Mammary epithelial cell (primary cell): ENCODE measurements at regions of chr3 and their contacts with region 1.

Region 1: DNA sequence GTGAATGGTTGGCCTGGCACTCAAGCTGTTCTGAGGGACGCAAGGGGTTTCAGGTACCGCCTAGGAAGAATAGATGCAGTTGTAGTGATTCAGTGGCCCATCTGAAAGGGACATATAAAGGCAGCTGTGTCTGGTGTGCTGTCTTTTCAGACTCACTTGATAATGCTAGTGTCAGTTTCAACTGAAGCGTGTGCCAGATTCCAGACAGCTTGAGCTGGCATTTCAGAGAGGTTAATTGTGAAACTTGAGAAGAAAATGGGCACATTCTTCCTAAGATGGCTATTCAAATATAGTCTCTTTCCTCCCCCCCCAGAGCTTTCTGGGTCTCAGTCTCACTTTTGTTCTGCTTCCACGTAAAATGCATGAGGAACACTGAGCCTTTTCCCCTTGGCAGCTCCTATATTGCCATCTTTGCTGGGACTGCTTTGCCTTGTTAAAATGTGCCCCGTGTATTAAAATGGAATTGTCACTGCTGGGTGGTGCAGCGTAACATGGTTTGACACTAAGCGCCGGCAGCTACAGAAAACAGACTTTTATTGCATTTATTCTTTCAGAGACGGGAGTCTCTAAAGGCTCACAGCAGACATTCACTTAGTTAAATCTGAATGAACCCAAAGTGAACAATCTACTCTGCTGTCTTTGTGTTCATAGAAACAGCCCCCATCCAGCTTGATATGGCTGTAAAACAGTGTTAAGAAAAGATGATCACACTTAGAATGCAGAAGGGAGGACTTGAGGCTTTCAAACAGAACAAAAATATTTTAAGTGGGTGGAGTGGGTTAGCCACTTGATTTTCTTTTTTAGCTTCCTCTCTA is 478.7 kb downstream of the RBMS3 start:
- DNase-seq: peak; percentile 78
- H3K4me3 ChIP-seq: no peak overlapping the region
- H3K27ac ChIP-seq: peak overlapping the region; percentile 89
- H3K4me1 ChIP-seq: peaks cover 40% of the 10 kb centered on the region
- H3K27me3 ChIP-seq: no peaks in the 10 kb centered on the region
- CTCF ChIP-seq: no peak

Region 2: DNA sequence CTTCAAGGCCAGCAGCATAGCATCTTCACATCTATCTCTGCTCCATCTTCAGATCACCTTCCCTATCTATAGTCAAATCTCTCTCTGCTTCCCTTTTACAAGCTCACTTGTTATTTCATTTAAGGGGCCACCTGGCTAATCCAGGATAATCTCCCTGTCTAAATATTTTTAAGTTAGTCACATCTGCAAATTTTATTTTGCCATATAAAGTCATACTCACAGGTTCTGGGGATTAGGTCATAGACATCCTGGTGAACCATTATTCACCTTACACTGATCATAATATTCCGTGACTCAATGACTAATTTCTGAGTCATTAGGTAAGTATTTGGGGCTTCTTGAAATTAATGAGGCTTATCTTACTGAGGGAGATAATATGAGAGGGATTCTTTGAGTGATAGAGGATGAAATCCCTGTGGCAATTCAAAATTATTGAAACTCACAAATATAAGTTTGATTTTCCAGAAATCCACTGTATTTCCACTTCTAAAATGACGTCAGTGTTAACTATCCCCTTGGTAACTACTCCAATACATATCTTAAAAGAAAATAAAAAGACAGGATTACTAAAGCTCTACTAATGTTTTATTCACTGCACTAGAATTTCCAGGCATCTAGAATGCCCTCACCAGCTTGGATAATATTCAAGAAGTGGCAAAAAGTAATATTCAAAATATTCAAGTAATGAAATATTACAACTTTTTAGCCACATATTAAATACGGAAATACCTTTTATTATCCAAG is 572.5 kb before region 1 on chr3:
- CTCF ChIA-PET with region 1: no interaction called
- dilution Hi-C with region 1: no loop called
- in situ Hi-C with region 1: no loop called
- intact Hi-C with region 1: loop called (anchors 2 kb)
- DNase-seq: peak; percentile 94
- H3K4me3 ChIP-seq: no peak overlapping the region
- H3K27ac ChIP-seq: peak overlapping the region; percentile 87
- H3K4me1 ChIP-seq: peaks cover 27% of the 10 kb centered on the region
- H3K27me3 ChIP-seq: no peaks in the 10 kb centered on the region
- CTCF ChIP-seq: no peak

Region 3: DNA sequence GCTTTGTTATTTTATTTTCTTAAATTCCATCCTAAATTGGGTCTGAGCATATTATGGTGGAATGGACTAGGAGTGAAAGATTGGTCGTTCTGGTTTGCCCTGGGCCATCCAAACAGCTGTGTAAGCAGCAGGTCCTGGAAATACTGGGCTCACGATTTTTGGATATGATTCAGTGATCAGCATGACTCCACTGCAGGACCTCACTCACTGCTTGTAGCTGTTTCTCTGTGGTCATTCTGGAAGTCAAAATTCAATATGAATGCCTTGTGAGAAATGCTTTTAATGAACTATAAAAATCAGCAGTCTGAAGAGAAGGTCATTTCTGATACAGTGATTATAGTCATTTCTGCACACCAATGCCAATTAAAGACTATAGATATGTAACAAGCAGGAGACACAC is 293.8 kb before region 1 on chr3:
- CTCF ChIA-PET with region 1: no interaction called
- dilution Hi-C with region 1: no loop called
- in situ Hi-C with region 1: loop called in 1 of 2 experiments (anchors 25 kb)
- intact Hi-C with region 1: loop called (anchors 5 kb)
- DNase-seq: peak; percentile 67
- H3K4me3 ChIP-seq: peak overlapping the region in 2 of 3 experiments; percentile 7 to 9
- H3K27ac ChIP-seq: peak overlapping the region; percentile 46
- H3K4me1 ChIP-seq: peaks cover 12% of the 10 kb centered on the region
- H3K27me3 ChIP-seq: no peaks in the 10 kb centered on the region
- CTCF ChIP-seq: no peak

Region 4: GRCh38 chr3:29693863-29694262 is 65.8 kb before region 1 on chr3:
- CTCF ChIA-PET with region 1: no interaction called
- dilution Hi-C with region 1: loop called (anchors 5 kb)
- in situ Hi-C with region 1: no loop called
- intact Hi-C with region 1: loop called (anchors 1 kb)
- DNase-seq: peak; percentile 57
- H3K4me3 ChIP-seq: peak overlapping the region in 1 of 3 experiments; percentile 15
- H3K27ac ChIP-seq: peak overlapping the region; percentile 95
- H3K4me1 ChIP-seq: peaks cover 34% of the 10 kb centered on the region
- H3K27me3 ChIP-seq: no peaks in the 10 kb centered on the region
- CTCF ChIP-seq: no peak

Region 5: DNA sequence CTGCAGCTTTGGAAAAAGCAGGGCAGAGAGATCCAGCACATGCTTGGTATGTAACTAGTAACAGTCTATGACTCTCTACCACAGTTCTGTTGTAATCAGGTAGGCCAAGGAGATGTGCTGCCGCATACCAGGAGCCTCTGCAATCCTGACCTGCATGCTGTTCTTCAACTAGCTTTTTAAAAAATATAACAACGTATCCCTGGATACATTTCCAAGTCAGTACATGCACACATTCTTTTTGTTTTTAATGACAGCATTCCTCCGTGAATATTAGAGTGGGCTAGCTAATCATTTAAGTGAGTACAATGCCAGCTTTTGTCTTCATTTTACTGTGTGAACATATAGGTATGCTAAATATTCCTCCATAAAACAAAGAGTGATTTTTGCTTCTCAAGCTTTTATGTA is 41.0 kb before region 1 on chr3:
- CTCF ChIA-PET with region 1: interaction called, 7 read pairs
- dilution Hi-C with region 1: no loop called
- in situ Hi-C with region 1: no loop called
- intact Hi-C with region 1: loop called (anchors 1 kb)
- DNase-seq: peak; percentile 91
- H3K4me3 ChIP-seq: no peak overlapping the region
- H3K27ac ChIP-seq: peak overlapping the region; percentile 89
- H3K4me1 ChIP-seq: peaks cover 21% of the 10 kb centered on the region
- H3K27me3 ChIP-seq: no peaks in the 10 kb centered on the region
- CTCF ChIP-seq: no peak

Region 6: DNA sequence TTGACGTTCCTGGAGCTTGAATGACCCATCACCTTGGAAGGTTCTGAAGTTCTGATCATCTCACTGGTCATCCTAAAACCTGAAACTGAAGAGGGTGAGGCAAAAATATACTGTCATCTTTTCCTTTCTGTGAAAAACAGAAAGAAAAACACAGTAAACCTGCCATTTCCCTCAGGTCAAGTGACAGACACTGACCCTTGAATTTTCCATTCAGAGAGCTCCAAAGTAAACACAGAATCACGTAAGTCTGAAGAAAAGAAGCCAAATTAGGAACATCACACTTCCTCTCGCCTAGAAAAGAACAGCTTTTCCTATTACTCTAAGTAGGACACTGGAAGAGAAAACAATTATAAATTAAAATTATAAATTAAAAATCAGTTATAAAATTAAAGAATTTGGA is 768.1 kb after region 1 on chr3:
- CTCF ChIA-PET with region 1: no interaction called
- dilution Hi-C with region 1: no loop called
- in situ Hi-C with region 1: no loop called
- intact Hi-C with region 1: no loop called
- DNase-seq: no peak
- H3K4me3 ChIP-seq: no peak overlapping the region
- H3K27ac ChIP-seq: no peak overlapping the region
- H3K4me1 ChIP-seq: peaks cover 18% of the 10 kb centered on the region
- H3K27me3 ChIP-seq: no peaks in the 10 kb centered on the region
- CTCF ChIP-seq: no peak